ENCODE measurements at regions of chr2 and their contacts with region 1.

Region 1: GRCh38 chr2:238320246-238320647 is at the start of gene TRAF3IP1:
- DNase-seq: peak; percentile 94 to 96 (median 95)
- ATAC-seq: peak; percentile 93 to 98 (median 97)
- H3K4me3 ChIP-seq: peak within 1 kb of the TSS; percentile 59 to 96 (median 81)
- H3K27ac ChIP-seq: peak within 1 kb of the TSS in 10 of 12 donors; percentile 32 to 76 (median 56)
- H3K4me1 ChIP-seq: peaks cover 0 to 29% (median 14%) of the 10 kb centered on the region in 12 donors
- H3K27me3 ChIP-seq: no peaks in the 10 kb centered on the region
- CTCF ChIP-seq: peak in 1 of 12 donors; percentile 7
- POLR2A ChIP-seq: no peak
- total RNA-seq, gene TRAF3IP1: 3.8 to 20.3 (median 13.8) TPM

Region 2: DNA sequence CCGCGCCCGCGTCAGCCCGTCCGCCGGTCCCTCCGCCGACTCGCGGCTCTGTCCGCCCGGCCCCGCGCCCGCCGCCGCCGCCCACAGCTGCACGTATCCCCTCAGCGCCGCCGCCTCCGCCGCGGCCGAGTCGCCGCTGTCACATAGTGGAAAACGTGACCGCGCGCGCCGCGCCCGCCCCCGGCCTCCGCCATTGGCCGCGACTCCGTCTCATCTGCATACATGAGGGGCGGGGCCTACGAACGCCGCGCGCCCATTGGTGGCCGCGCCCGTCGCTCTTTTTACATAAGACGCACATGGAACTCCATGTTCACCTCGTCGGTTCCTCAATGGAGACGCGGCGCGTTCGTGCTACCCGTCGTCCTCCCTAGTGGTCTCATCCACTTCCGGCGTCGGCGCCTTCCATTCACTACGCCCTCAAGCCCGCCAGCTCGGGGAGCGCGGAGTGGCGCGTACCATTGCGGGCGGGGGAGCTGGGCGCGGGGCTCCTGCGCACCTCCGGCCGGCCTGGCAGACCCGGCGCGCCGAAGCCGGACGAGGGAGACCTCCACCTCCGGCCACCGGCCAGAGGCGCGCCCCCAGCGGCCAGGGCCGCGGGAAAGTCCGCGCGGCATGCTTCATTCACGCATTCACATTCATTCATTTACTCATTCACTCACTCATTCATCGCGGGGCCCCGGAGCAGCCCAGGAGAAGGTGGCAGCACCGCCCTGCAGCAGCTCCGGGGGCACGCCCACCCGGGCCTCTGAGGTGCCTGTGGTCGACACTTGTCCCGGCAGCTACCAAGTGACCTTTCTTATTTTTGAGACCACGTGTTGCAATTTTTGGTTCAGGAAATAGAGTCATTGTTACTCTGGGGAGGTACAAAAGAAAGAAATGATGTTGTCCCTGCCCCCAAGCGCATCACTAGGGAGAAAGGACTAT is 31.3 kb before region 1 on chr2:
- intact Hi-C with region 1: loop called in 1 of 10 experiments (anchors 1 kb)
- DNase-seq: peak; percentile 96 to 99 (median 98)
- ATAC-seq: peak; percentile 85 to 90 (median 89)
- H3K4me3 ChIP-seq: peak overlapping the region; percentile 28 to 99 (median 86)
- H3K27ac ChIP-seq: peak overlapping the region; percentile 14 to 98 (median 88)
- H3K4me1 ChIP-seq: peaks cover 4 to 57% (median 43%) of the 10 kb centered on the region in 12 donors
- H3K27me3 ChIP-seq: no peaks in the 10 kb centered on the region
- CTCF ChIP-seq: peak in 7 of 12 donors; percentile 26 to 60 (median 43)
- POLR2A ChIP-seq: peak; percentile 25 to 41